Transverse colon (tissue), 4 donors: ENCODE measurements at regions of chr6 and their contacts with region 1.

Region 1: GRCh38 chr6:147506704-147507114 is 1.8 kb upstream of the SAMD5 start:
- DNase-seq: peak; percentile 82
- H3K4me3 ChIP-seq: peak overlapping the region in 3 of 4 donors; percentile 61 to 75 (median 68)
- H3K27ac ChIP-seq: no peak overlapping the region
- H3K4me1 ChIP-seq: peaks cover 6 to 35% (median 17%) of the 10 kb centered on the region in 4 donors
- H3K27me3 ChIP-seq: peaks cover 28% of the 10 kb centered on the region
- CTCF ChIP-seq: peak; percentile 77 to 83 (median 80)
- EP300 ChIP-seq: no peak
- POLR2A ChIP-seq: no peak

Region 2: GRCh38 chr6:147299035-147299434 is 207.7 kb before region 1 on chr6:
- in situ Hi-C with region 1: no loop called
- intact Hi-C with region 1: no loop called
- DNase-seq: no peak
- H3K4me3 ChIP-seq: no peak overlapping the region
- H3K27ac ChIP-seq: no peak overlapping the region
- H3K4me1 ChIP-seq: no peaks in the 10 kb centered on the region
- H3K27me3 ChIP-seq: no peaks in the 10 kb centered on the region
- CTCF ChIP-seq: no peak
- EP300 ChIP-seq: no peak
- POLR2A ChIP-seq: no peak

Region 3: GRCh38 chr6:148166339-148166968 is 659.7 kb after region 1 on chr6:
- in situ Hi-C with region 1: loop called (anchors 10 kb)
- intact Hi-C with region 1: loop called (anchors 1 kb)
- DNase-seq: no peak
- H3K4me3 ChIP-seq: no peak overlapping the region
- H3K27ac ChIP-seq: no peak overlapping the region
- H3K4me1 ChIP-seq: no peaks in the 10 kb centered on the region
- H3K27me3 ChIP-seq: no peaks in the 10 kb centered on the region
- CTCF ChIP-seq: peak; percentile 63 to 70 (median 68)
- EP300 ChIP-seq: no peak
- POLR2A ChIP-seq: no peak

Region 4: DNA sequence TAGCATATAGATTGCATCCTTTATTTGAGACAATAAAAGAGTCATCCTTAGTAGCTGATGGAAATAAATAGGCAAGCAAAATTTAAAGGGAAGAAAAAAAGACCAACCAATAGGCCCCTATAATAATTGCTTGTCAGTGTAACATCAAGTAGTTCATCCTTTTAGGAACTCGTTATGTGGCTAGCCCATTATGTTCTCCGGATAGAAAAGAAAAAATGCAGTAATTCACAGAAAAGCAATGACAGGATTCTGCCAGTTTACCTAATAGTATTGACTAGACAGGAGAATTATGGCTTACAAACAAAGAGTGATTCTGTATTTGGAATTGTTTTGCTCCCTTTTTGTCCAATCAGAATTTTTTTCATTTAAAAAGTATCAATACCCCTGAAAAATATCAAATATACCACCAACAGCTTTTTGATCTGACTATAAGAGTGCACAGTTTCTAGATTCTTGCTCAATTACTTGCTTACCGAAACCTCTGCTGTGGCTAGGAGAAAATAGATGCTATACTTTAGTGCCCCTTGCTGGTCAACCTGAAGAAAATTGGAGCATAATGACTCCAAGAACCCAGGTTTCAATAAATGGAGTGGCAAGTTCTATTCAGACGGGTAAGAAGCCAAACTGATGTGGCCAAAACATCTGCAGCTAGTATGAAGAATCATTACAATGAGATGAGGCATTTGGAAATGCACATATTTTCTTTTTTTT is 744.4 kb after region 1 on chr6:
- in situ Hi-C with region 1: no loop called
- intact Hi-C with region 1: loop called (anchors 10 kb)
- DNase-seq: no peak
- H3K4me3 ChIP-seq: no peak overlapping the region
- H3K27ac ChIP-seq: no peak overlapping the region
- H3K4me1 ChIP-seq: no peaks in the 10 kb centered on the region
- H3K27me3 ChIP-seq: no peaks in the 10 kb centered on the region
- CTCF ChIP-seq: peak; percentile 19 to 38 (median 28)
- EP300 ChIP-seq: no peak
- POLR2A ChIP-seq: no peak

Region 5: GRCh38 chr6:148464319-148465010 is 957.8 kb after region 1 on chr6:
- in situ Hi-C with region 1: loop called in 1 of 4 experiments (anchors 25 kb)
- intact Hi-C with region 1: loop called (anchors 10 kb)
- DNase-seq: peak; percentile 69
- H3K4me3 ChIP-seq: no peak overlapping the region
- H3K27ac ChIP-seq: no peak overlapping the region
- H3K4me1 ChIP-seq: peaks cover 0 to 31% (median 6%) of the 10 kb centered on the region in 4 donors
- H3K27me3 ChIP-seq: no peaks in the 10 kb centered on the region
- CTCF ChIP-seq: peak; percentile 82 to 95 (median 92)
- EP300 ChIP-seq: no peak
- POLR2A ChIP-seq: no peak